Ascending aorta (tissue), 2 donors: ENCODE measurements at regions of chr20 and their contacts with region 1.

Region 1: GRCh38 chr20:43827940-43828562 is 86.6 kb upstream of the TOX2 start:
- DNase-seq: no peak
- H3K4me3 ChIP-seq: no peak overlapping the region
- H3K27ac ChIP-seq: no peak overlapping the region
- H3K4me1 ChIP-seq: no peaks in the 10 kb centered on the region
- H3K27me3 ChIP-seq: no peaks in the 10 kb centered on the region
- CTCF ChIP-seq: no peak

Region 2: DNA sequence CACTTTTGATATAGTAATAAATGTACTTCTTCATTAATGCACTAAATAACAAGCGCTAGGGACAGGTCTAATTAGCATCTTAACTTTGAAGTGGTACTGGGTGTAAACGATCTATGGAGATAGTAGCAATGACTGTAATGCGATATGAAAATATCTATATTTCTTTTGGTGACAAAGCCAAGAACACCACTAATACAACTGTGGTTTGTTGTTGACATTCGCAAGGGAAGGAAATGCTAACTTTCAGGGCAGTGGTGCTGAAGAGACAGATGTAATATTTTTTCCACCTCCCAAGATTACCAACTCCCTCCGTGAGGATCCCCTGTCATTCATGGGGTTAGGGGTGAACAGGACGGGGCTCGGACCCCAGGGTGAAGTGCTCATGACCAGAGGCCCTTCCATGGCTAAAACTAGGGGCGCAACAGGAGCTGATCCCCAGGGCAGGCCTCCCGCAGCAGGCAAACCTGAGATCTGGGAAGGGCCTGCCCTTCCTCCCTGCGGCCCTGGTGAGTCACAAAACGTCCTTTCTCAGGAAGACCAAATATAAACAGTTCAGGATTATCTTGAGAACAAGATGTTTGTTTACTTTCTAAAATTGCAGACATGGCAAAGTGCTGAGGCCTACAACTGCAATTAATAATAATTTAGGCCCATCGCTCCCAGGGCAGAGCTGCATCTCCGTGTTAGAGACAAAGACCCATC is 21.6 kb after region 1 on chr20:
- intact Hi-C with region 1: loop called (anchors 2 kb)
- DNase-seq: no peak
- H3K4me3 ChIP-seq: no peak overlapping the region
- H3K27ac ChIP-seq: peak overlapping the region in 1 of 2 donors; percentile 27
- H3K4me1 ChIP-seq: no peaks in the 10 kb centered on the region
- H3K27me3 ChIP-seq: no peaks in the 10 kb centered on the region
- CTCF ChIP-seq: no peak